ENCODE measurements at regions of chr13 and their contacts with region 1.

Region 1: GRCh38 chr13:31161828-31162590 is at the start of gene HSPH1:
- DNase-seq: peak; percentile 99
- ATAC-seq: peak; percentile 91
- H3K4me3 Mint-ChIP-seq: peak within 1 kb of the TSS; percentile 88
- H3K27ac Mint-ChIP-seq: peak within 1 kb of the TSS; percentile 100
- H3K4me1 Mint-ChIP-seq: peaks cover 31% of the 10 kb centered on the region
- H3K27me3 Mint-ChIP-seq: no peaks in the 10 kb centered on the region
- total RNA-seq, gene HSPH1: 229 to 259 TPM

Region 2: DNA sequence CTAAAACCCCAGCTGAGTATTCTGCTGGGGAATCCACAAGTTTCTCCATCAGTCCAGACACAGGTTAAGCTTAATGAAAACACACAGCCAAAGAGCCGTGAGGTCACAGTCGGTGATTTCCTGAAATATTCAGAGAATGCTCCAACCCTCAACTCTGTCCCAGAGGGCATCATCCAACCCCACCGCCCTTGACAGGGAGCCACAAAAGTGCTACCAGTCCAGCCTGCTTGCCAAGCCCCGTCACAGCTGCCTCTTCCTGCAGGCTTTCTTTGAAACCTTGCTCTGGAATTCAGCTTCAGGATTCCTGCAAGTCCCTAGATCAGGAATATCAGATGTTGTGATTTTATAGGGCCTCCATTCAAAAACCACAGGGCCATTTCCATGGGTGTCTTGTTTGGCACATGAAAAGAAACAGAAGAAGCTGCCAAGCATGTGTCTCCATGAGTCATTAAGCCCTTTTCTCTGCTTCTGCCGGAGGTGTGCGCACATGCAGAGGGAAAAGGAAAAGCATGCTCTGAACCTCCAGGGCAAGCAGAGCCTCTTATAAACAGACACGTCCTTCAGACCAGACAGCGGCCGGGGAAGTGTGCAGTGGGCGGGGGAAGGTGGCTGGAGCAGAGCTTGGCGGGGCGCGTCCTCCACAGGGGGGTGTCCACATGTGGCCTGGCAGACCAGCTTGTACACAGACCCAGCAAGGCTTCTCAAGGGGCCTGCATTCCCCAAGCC is 1019.4 kb before region 1 on chr13:
- CTCF ChIA-PET with region 1: no interaction called
- POLR2A ChIA-PET with region 1: no interaction called
- intact Hi-C with region 1: loop called in 1 of 2 experiments (anchors 5 kb)
- DNase-seq: peak; percentile 66
- ATAC-seq: peak; percentile 49
- H3K4me3 Mint-ChIP-seq: no peak overlapping the region
- H3K27ac Mint-ChIP-seq: peak overlapping the region; percentile 84
- H3K4me1 Mint-ChIP-seq: peaks cover 62% of the 10 kb centered on the region
- H3K27me3 Mint-ChIP-seq: no peaks in the 10 kb centered on the region

Region 3: DNA sequence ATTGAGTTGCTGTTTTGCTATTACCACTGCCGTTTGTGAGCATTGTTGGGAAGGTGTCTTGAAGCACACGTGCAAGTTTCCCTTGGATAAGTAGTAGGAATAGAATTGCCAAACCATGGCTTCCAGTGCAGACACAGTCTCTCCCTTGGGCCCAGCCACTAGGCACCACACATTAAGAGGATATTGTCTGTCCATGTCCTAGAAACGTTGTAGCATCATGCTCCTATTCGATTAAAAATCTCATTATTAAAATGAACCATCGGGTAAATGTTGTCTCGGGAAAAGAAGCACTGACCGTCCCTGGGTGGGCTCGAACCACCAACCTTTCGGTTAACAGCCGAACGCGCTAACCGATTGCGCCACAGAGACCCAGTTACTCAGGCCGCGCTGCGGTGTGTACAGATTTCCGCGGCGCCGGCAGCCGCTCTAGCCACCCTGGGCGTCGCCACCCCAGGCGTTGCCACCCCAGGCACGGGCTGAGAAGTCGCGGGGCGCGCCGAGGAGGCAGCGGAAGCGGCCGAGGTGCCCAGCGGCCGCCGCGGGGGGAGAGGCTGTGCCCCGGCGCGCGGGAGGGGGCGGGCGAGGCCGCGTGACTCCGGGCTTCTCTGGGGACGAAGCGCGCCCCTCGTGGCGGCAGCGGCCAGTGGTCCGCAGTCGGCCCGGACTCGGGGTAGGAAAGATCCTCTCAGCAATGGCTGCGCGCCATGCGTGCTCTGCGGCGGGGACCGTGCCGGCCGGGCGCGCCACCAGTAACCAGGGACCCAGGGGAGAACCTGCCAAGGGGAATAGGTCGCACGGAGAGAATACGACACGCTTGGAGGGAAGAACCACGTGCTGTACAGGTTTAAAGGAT is 488.1 kb before region 1 on chr13:
- CTCF ChIA-PET with region 1: no interaction called
- POLR2A ChIA-PET with region 1: no interaction called
- intact Hi-C with region 1: loop called in 1 of 2 experiments (anchors 1 kb)
- DNase-seq: peak; percentile 92
- ATAC-seq: peak; percentile 97
- H3K4me3 Mint-ChIP-seq: peak overlapping the region; percentile 72
- H3K27ac Mint-ChIP-seq: peak overlapping the region; percentile 73
- H3K4me1 Mint-ChIP-seq: peaks cover 12% of the 10 kb centered on the region
- H3K27me3 Mint-ChIP-seq: no peaks in the 10 kb centered on the region

Region 4: GRCh38 chr13:31149604-31150003 is 12.4 kb before region 1 on chr13:
- CTCF ChIA-PET with region 1: no interaction called
- POLR2A ChIA-PET with region 1: interaction called, 3 read pairs
- intact Hi-C with region 1: loop called in 1 of 2 experiments (anchors 1 kb)
- DNase-seq: no peak
- ATAC-seq: no peak
- H3K4me3 Mint-ChIP-seq: no peak overlapping the region
- H3K27ac Mint-ChIP-seq: peak overlapping the region; percentile 39
- H3K4me1 Mint-ChIP-seq: peaks cover 36% of the 10 kb centered on the region
- H3K27me3 Mint-ChIP-seq: no peaks in the 10 kb centered on the region

Region 5: GRCh38 chr13:32315238-32316027 is 1153.4 kb after region 1 on chr13 and contains the starts of genes BRCA2 and ZAR1L:
- CTCF ChIA-PET with region 1: no interaction called
- POLR2A ChIA-PET with region 1: no interaction called
- intact Hi-C with region 1: loop called in 1 of 2 experiments (anchors 5 kb)
- DNase-seq: peak; percentile 94
- ATAC-seq: peak; percentile 95
- H3K4me3 Mint-ChIP-seq: peak within 1 kb of the TSS; percentile 92
- H3K27ac Mint-ChIP-seq: peak within 1 kb of the TSS; percentile 100
- H3K4me1 Mint-ChIP-seq: peaks cover 9% of the 10 kb centered on the region
- H3K27me3 Mint-ChIP-seq: no peaks in the 10 kb centered on the region
- total RNA-seq, gene BRCA2: 34.1 to 49.0 TPM
- total RNA-seq, gene ZAR1L: not detected

Measured in activated CD4-positive, alpha-beta T cell treated with anti-CD3 and anti-CD28 coated beads for 36 hours (primary cell).